IMR-90 (cell line): ENCODE measurements at regions of chr18 and their contacts with region 1.

Region 1: GRCh38 chr18:55234366-55235093 is 275.3 kb upstream of the CCDC68 start:
- DNase-seq: peak; percentile 79
- ATAC-seq: peak; percentile 92
- H3K4me3 ChIP-seq: no peak overlapping the region
- H3K27ac ChIP-seq: no peak overlapping the region
- H3K4me1 ChIP-seq: no peaks in the 10 kb centered on the region
- H3K27me3 ChIP-seq: no peaks in the 10 kb centered on the region
- CTCF ChIP-seq: peak; percentile 88
- POLR2A ChIP-seq: no peak
- RAD21 ChIP-seq: peak; percentile 95

Region 2: GRCh38 chr18:55275039-55275901 is 40.7 kb after region 1 on chr18:
- CTCF ChIA-PET with region 1: interaction called, 11 read pairs
- POLR2A ChIA-PET with region 1: no interaction called
- dilution Hi-C with region 1: no loop called
- in situ Hi-C with region 1: no loop called
- intact Hi-C with region 1: no loop called
- DNase-seq: peak; percentile 82
- ATAC-seq: peak; percentile 84
- H3K4me3 ChIP-seq: no peak overlapping the region
- H3K27ac ChIP-seq: no peak overlapping the region
- H3K4me1 ChIP-seq: peaks cover 2% of the 10 kb centered on the region
- H3K27me3 ChIP-seq: no peaks in the 10 kb centered on the region
- CTCF ChIP-seq: 0 out of 2 replicates have a peak, but pooled peaks have one; percentile 20
- POLR2A ChIP-seq: no peak
- RAD21 ChIP-seq: no peak

Region 3: DNA sequence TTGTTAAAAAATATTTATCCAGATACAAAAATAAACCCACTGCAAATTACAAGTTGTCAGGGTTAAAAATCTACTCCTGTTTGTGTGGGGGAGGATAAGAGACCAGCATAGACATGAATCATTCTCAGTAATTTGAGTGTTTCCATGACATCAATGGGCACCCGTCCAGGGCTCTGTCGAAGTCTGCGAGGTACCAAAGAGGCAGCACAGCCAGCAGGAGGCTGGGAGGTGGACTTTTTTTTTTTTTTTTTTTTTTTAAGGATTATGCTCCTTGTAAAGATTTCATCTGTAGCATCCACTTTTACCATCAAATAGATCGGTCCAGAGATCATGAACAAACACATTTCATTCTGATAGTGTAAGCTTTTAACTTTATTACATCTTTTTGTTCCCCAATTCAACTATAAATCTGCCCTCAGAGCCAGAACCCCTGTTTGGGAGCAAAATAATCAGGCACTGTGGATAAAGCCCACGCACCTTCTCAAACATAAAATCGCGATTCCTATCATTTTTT is 171.4 kb after region 1 on chr18:
- CTCF ChIA-PET with region 1: no interaction called
- POLR2A ChIA-PET with region 1: no interaction called
- dilution Hi-C with region 1: no loop called
- in situ Hi-C with region 1: loop called (anchors 25 kb)
- intact Hi-C with region 1: loop called (anchors 2 kb)
- DNase-seq: peak; percentile 95
- ATAC-seq: peak; percentile 44
- H3K4me3 ChIP-seq: peak overlapping the region; percentile 9; the same call in 1 of the 2 replicates
- H3K27ac ChIP-seq: peak overlapping the region; percentile 32; the same call in 1 of the 2 replicates
- H3K4me1 ChIP-seq: peaks cover 7% of the 10 kb centered on the region
- H3K27me3 ChIP-seq: no peaks in the 10 kb centered on the region
- CTCF ChIP-seq: no peak
- POLR2A ChIP-seq: no peak
- RAD21 ChIP-seq: peak; percentile 21; the same call in 1 of the 2 replicates

Region 4: GRCh38 chr18:55781481-55781957 is 547.0 kb after region 1 on chr18:
- CTCF ChIA-PET with region 1: interaction called, 5 read pairs
- POLR2A ChIA-PET with region 1: no interaction called
- dilution Hi-C with region 1: no loop called
- in situ Hi-C with region 1: loop called (anchors 5 kb)
- intact Hi-C with region 1: loop called (anchors 1 kb)
- DNase-seq: peak; percentile 77
- ATAC-seq: peak; percentile 63
- H3K4me3 ChIP-seq: no peak overlapping the region
- H3K27ac ChIP-seq: no peak overlapping the region
- H3K4me1 ChIP-seq: no peaks in the 10 kb centered on the region; the same call in 1 of the 2 replicates
- H3K27me3 ChIP-seq: no peaks in the 10 kb centered on the region
- CTCF ChIP-seq: peak; percentile 80
- POLR2A ChIP-seq: no peak
- RAD21 ChIP-seq: peak; percentile 87